Naive thymus-derived CD4-positive, alpha-beta T cell (primary cell): ENCODE measurements at regions of chr6 and their contacts with region 1.

Region 1: GRCh38 chr6:139117734-139118133 is 17.1 kb upstream of the HECA start:
- DNase-seq: no peak
- ATAC-seq: no peak
- H3K4me3 ChIP-seq: no peak overlapping the region
- H3K4me3 Mint-ChIP-seq: peak overlapping the region in 8 of 10 donors; percentile 14 to 79 (median 50)
- H3K27ac ChIP-seq: no peak overlapping the region
- H3K27ac Mint-ChIP-seq: peak overlapping the region in 8 of 9 donors; percentile 41 to 94 (median 74)
- H3K4me1 ChIP-seq: peaks cover 22 to 45% of the 10 kb centered on the region in 2 donors
- H3K4me1 Mint-ChIP-seq: peaks cover 26 to 59% (median 52%) of the 10 kb centered on the region in 7 donors
- H3K27me3 ChIP-seq: no peaks in the 10 kb centered on the region
- H3K27me3 Mint-ChIP-seq: no peaks in the 10 kb centered on the region

Region 2: GRCh38 chr6:138996524-138996923 is 121.2 kb before region 1 on chr6:
- CTCF ChIA-PET with region 1: no interaction called
- POLR2A ChIA-PET with region 1: no interaction called
- intact Hi-C with region 1: no loop called
- DNase-seq: no peak
- ATAC-seq: no peak
- H3K4me3 ChIP-seq: no peak overlapping the region
- H3K4me3 Mint-ChIP-seq: no peak overlapping the region
- H3K27ac ChIP-seq: no peak overlapping the region
- H3K27ac Mint-ChIP-seq: no peak overlapping the region
- H3K4me1 ChIP-seq: no peaks in the 10 kb centered on the region
- H3K4me1 Mint-ChIP-seq: peaks cover 0 to 3% (median 0%) of the 10 kb centered on the region in 7 donors
- H3K27me3 ChIP-seq: no peaks in the 10 kb centered on the region
- H3K27me3 Mint-ChIP-seq: peaks cover 0 to 5% (median 2%) of the 10 kb centered on the region in 5 donors

Region 3: DNA sequence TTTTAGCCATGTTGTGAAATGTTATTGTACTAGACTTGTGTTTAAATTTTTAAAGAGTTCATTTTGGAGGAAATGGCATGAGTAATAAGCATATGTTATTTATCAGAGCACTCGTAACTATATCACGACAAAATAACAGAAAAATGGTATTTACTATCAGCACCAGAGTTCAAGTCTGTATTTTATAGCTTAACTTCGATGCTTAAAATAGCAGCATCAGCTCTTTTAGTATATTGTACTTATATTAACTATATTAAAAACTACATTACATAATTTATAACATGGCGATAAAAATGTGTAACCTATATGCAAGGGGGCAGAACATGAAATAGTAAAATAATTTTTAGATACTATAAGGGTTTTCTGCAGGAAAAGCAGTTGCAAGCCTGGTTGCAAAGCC is 36.3 kb before region 1 on chr6:
- CTCF ChIA-PET with region 1: no interaction called
- POLR2A ChIA-PET with region 1: no interaction called
- intact Hi-C with region 1: no loop called
- DNase-seq: no peak
- ATAC-seq: no peak
- H3K4me3 ChIP-seq: no peak overlapping the region
- H3K4me3 Mint-ChIP-seq: no peak overlapping the region
- H3K27ac ChIP-seq: no peak overlapping the region
- H3K27ac Mint-ChIP-seq: no peak overlapping the region
- H3K4me1 ChIP-seq: no peaks in the 10 kb centered on the region
- H3K4me1 Mint-ChIP-seq: peaks cover 0 to 11% (median 8%) of the 10 kb centered on the region in 7 donors
- H3K27me3 ChIP-seq: no peaks in the 10 kb centered on the region
- H3K27me3 Mint-ChIP-seq: no peaks in the 10 kb centered on the region

Region 4: GRCh38 chr6:139099984-139100383 is 17.8 kb before region 1 on chr6:
- CTCF ChIA-PET with region 1: interaction called, 3 read pairs
- POLR2A ChIA-PET with region 1: interaction called, 10 read pairs
- intact Hi-C with region 1: loop called in 1 of 2 experiments (anchors 2 kb)
- DNase-seq: no peak
- ATAC-seq: no peak
- H3K4me3 ChIP-seq: no peak overlapping the region
- H3K4me3 Mint-ChIP-seq: no peak overlapping the region
- H3K27ac ChIP-seq: no peak overlapping the region
- H3K27ac Mint-ChIP-seq: no peak overlapping the region
- H3K4me1 ChIP-seq: no peaks in the 10 kb centered on the region
- H3K4me1 Mint-ChIP-seq: peaks cover 0 to 17% (median 11%) of the 10 kb centered on the region in 7 donors
- H3K27me3 ChIP-seq: no peaks in the 10 kb centered on the region
- H3K27me3 Mint-ChIP-seq: peaks cover 0 to 3% (median 0%) of the 10 kb centered on the region in 5 donors